ENCODE measurements at regions of chr2 and their contacts with region 1.

Region 1: DNA sequence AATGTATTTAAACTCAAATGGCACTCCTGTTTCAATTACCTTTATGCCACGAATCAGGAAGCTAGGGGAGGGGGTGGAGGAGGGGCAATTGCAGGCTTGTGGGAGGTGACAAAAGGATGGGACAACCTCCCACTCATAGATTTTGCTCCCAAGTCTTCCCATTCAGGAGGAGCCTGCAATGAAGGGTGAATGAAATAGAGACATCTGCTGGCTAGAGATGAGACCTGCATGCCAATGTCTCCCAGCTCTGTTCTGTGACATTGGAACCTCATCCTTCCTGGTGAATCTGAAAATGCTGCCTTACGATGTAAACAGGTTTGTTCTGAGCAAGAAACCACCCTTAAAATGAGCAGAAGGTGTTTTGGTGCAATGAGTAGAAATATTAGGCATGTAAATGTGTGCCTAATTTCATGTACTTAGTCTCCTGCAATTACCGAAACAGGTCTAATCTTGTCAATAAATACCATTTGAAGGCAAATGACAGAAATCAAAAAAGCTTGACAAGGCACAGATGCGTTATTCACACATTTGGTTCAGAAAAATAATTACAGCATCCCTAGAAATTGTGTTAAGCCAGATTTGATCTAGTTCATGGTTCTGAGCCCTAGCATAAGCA is 2.7 kb upstream of the PID1 start:
- DNase-seq: no peak
- H3K4me3 ChIP-seq: peak overlapping the region; percentile 23
- H3K27me3 ChIP-seq: no peaks in the 10 kb centered on the region
- CTCF ChIP-seq: peak; percentile 87

Region 2: GRCh38 chr2:228681426-228681825 is 592.4 kb before region 1 on chr2:
- CTCF ChIA-PET with region 1: interaction called, 28 read pairs
- POLR2A ChIA-PET with region 1: no interaction called
- DNase-seq: no peak
- H3K4me3 ChIP-seq: no peak overlapping the region
- H3K27me3 ChIP-seq: no peaks in the 10 kb centered on the region; the same call in 1 of the 2 replicates
- CTCF ChIP-seq: peak; percentile 59

Region 3: DNA sequence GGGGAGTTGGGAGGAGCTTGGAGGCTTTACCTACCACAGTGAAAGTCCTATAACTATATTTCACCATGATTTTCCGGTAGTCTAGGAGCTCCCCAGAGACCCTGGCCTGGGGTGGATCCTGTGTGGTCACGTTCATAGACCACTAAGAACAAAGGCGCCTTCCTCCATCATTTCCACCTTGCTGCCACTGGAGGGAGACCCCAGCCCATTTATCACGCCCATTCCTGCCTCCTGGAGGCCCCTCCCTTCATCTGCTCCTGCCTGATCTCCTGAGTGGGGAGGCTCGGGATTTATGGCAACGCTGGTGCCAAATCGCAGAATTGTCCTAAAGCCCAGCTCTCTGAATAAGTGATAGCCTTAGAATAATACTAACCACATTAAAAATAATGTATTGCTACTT is 584.8 kb before region 1 on chr2:
- CTCF ChIA-PET with region 1: interaction called, 10 read pairs
- POLR2A ChIA-PET with region 1: no interaction called
- DNase-seq: no peak
- H3K4me3 ChIP-seq: no peak overlapping the region
- H3K27me3 ChIP-seq: no peaks in the 10 kb centered on the region; the same call in 1 of the 2 replicates
- CTCF ChIP-seq: no peak; the same call in 1 of the 2 replicates

Region 4: DNA sequence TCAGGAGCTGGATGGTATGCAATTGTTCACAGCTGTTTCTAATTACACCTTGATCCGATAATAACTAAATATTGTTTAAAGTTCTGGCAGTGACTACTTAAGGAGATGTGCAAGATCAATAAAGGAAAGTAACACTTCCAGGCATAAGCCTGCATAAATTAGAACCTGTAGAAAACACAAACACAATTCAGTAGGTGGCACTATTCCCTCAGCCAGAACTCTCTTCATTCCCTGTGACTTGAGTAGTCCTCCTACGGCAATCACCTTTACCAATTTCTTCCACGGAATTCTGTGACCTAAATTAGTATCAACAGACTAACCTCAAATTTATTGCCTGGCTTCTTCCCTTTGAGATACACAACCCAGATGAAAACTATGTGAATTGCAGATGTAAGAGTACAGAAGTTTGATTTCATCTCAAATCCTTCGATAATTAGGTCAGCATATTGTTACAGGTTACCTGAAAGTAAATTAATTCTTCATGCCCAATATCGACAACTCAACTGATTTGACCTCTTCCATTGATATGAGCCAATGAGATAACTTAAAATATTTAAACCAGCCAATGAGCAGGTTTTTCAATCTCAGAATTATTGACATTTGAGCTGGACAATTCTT is 140.6 kb before region 1 on chr2:
- CTCF ChIA-PET with region 1: interaction called, 23 read pairs
- POLR2A ChIA-PET with region 1: interaction called, 4 read pairs
- DNase-seq: no peak
- H3K4me3 ChIP-seq: no peak overlapping the region
- H3K27me3 ChIP-seq: no peaks in the 10 kb centered on the region
- CTCF ChIP-seq: peak; percentile 55

Measured in BJ (cell line).